IMR-90 (cell line): ENCODE measurements at regions of chr11 and their contacts with region 1.

Region 1: DNA sequence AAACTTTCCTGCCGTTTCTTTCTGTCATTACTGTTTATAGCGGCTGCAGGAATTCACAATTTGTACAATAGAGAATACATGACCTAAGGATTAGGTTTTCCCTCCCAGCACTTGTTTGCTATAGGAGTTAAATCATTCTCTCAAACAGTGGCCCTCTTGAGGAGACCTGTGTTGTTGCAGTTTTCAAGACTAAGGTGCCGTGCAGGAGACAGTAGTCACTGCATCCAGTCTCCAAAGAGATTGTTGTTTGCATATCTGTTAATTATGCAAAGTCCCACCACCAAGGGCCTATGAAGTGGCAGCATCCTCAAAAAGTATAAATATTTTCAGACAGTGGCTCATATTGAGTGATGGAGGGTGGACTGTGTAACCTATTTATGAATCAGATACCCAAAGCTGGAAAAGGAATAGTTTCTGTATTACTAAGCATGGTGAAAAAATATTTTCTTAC is 2.3 kb downstream of the PRSS23 start:
- DNase-seq: peak; percentile 57
- ATAC-seq: peak; percentile 15; the same call in 1 of the 2 replicates
- H3K4me3 ChIP-seq: peak overlapping the region; percentile 82; the same call in 1 of the 2 replicates
- H3K27ac ChIP-seq: no peak overlapping the region
- H3K4me1 ChIP-seq: peaks cover 22% of the 10 kb centered on the region
- H3K27me3 ChIP-seq: no peaks in the 10 kb centered on the region
- CTCF ChIP-seq: peak; percentile 45
- POLR2A ChIP-seq: no peak
- RAD21 ChIP-seq: peak; percentile 42

Region 2: GRCh38 chr11:86632499-86633269 is 169.9 kb before region 1 on chr11:
- CTCF ChIA-PET with region 1: no interaction called
- POLR2A ChIA-PET with region 1: no interaction called
- dilution Hi-C with region 1: no loop called
- in situ Hi-C with region 1: no loop called
- intact Hi-C with region 1: loop called (anchors 5 kb)
- DNase-seq: peak; percentile 99
- ATAC-seq: peak; percentile 93
- H3K4me3 ChIP-seq: no peak overlapping the region
- H3K27ac ChIP-seq: peak overlapping the region; percentile 47
- H3K4me1 ChIP-seq: peaks cover 25% of the 10 kb centered on the region
- H3K27me3 ChIP-seq: no peaks in the 10 kb centered on the region
- CTCF ChIP-seq: no peak; the same call in 1 of the 2 replicates
- POLR2A ChIP-seq: peak; percentile 37; the same call in 1 of the 2 replicates
- RAD21 ChIP-seq: peak; percentile 47

Region 3: DNA sequence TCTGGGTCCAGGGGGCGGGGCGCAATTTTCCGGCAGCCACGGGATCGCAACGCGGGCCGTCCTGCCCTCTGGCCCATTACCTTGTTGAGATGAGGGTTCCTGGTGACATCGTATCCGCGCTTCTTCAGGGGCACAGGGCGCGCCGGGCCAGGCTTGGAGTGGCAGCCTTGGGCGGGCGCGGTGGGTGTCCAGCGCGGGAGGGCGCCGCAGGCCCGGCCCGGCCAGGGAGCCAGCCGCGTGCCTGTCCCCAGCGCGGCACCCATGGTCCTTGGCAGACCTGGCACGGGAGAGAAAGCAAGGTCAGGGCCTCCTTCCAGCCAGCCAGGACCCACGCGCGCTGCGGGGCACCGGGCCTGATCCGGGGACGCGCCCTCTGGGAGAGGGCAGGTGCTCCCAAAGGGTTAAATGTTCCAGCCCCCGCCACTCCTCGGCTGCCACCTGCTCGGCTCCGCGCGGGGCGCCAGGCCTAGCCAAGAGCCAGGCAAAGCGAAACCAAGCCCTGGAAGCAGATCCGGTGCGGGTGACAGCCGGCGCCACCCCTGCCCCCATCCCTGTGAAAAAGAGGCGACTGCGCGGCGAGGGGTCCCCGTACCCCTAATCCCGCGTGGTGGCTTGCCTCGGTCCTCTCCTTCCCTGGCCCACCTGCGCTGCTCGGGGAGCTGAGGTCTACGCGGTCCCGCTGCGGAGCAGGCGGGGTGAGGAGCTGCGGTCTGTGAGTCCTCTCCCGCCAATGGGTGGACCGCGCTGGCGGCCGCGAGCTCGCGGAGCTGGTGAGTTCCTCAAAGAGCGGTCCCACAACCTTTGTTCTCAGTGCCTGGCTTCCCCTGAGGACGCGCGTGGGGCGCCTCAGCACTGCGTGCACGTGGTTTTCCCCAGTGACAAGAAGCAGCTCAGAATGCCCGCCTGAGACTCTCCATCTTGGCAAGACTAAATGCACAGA is 130.7 kb before region 1 on chr11 and contains the start of gene ME3:
- CTCF ChIA-PET with region 1: interaction called, 3 read pairs
- POLR2A ChIA-PET with region 1: no interaction called
- dilution Hi-C with region 1: no loop called
- in situ Hi-C with region 1: loop called (anchors 5 kb)
- intact Hi-C with region 1: loop called (anchors 2 kb)
- DNase-seq: peak; percentile 44
- ATAC-seq: peak; percentile 83
- H3K4me3 ChIP-seq: peak within 1 kb of the TSS; percentile 64
- H3K27ac ChIP-seq: peak within 1 kb of the TSS; percentile 18; the same call in 1 of the 2 replicates
- H3K4me1 ChIP-seq: 0 out of 2 replicates have a peak, but pooled peaks cover 2% of the 10 kb centered on the region
- H3K27me3 ChIP-seq: no peaks in the 10 kb centered on the region
- CTCF ChIP-seq: no peak
- POLR2A ChIP-seq: no peak
- RAD21 ChIP-seq: 0 out of 2 replicates have a peak, but pooled peaks have one; percentile 3
- total RNA-seq, gene ME3: 9.0 and 9.2 TPM in 2 replicates